Activated CD8-positive, alpha-beta T cell treated with anti-CD3 and anti-CD28 coated beads for 36 hours (primary cell): ENCODE measurements at regions of chr1 and their contacts with region 1.

Region 1: GRCh38 chr1:169601093-169601881 is 15.0 kb upstream of the F5 start:
- DNase-seq: no peak
- ATAC-seq: peak; percentile 38
- H3K4me3 Mint-ChIP-seq: no peak overlapping the region
- H3K27ac Mint-ChIP-seq: peak overlapping the region; percentile 69
- H3K4me1 Mint-ChIP-seq: peaks cover 47% of the 10 kb centered on the region
- H3K27me3 Mint-ChIP-seq: no peaks in the 10 kb centered on the region
- CTCF ChIP-seq: peak; percentile 77

Region 2: DNA sequence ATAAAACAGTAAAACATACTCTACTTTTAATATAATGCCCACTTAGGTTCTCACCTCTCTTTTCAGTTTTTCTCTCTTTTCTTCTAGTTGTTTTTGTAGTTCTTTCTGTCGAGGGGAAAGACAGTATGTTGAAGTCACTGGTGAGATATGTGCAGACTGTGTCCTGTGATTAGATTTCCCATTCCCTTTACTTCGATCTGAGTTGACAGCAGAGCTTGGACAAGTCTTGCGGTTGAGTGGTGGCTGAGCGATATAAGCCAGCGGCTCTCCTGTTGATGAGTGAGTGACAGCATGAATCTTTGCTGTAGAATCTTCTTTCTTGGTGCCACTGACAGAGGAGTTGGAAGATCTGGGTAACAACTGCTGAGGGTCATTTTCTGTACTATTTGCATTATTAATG is 180.0 kb before region 1 on chr1:
- CTCF ChIA-PET with region 1: no interaction called
- POLR2A ChIA-PET with region 1: no interaction called
- intact Hi-C with region 1: no loop called
- DNase-seq: no peak
- ATAC-seq: no peak
- H3K4me3 Mint-ChIP-seq: no peak overlapping the region
- H3K27ac Mint-ChIP-seq: no peak overlapping the region
- H3K4me1 Mint-ChIP-seq: no peaks in the 10 kb centered on the region
- H3K27me3 Mint-ChIP-seq: peaks cover 39% of the 10 kb centered on the region
- CTCF ChIP-seq: no peak

Region 3: GRCh38 chr1:169618367-169618766 is 17.1 kb after region 1 on chr1:
- CTCF ChIA-PET with region 1: interaction called, 25 read pairs
- POLR2A ChIA-PET with region 1: interaction called, 4 read pairs
- intact Hi-C with region 1: no loop called
- DNase-seq: no peak
- ATAC-seq: no peak
- H3K4me3 Mint-ChIP-seq: no peak overlapping the region
- H3K27ac Mint-ChIP-seq: no peak overlapping the region
- H3K4me1 Mint-ChIP-seq: peaks cover 18% of the 10 kb centered on the region
- H3K27me3 Mint-ChIP-seq: no peaks in the 10 kb centered on the region
- CTCF ChIP-seq: no peak

Region 4: DNA sequence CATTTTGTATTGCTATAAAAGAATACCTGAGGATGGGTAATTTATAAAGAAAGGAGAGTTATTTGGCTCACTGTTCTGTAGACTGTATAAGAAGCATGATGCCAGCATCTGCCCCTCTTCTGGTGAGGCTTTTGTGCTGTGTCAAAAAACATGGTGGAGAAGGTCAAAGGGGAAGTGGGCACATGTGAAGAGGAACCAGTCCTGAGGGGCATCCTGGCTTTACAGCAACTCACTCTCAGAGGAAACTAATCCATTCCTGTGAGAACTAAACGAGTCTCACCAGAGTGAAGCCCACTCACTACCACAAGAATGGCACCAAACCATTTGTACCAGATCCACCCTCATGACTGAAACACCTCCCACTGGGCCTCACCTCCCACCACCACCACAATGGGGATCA is 47.4 kb after region 1 on chr1:
- CTCF ChIA-PET with region 1: interaction called, 10 read pairs
- POLR2A ChIA-PET with region 1: no interaction called
- intact Hi-C with region 1: no loop called
- DNase-seq: no peak
- ATAC-seq: peak; percentile 37
- H3K4me3 Mint-ChIP-seq: no peak overlapping the region
- H3K27ac Mint-ChIP-seq: peak overlapping the region; percentile 58
- H3K4me1 Mint-ChIP-seq: peaks cover 33% of the 10 kb centered on the region
- H3K27me3 Mint-ChIP-seq: no peaks in the 10 kb centered on the region
- CTCF ChIP-seq: no peak

Region 5: DNA sequence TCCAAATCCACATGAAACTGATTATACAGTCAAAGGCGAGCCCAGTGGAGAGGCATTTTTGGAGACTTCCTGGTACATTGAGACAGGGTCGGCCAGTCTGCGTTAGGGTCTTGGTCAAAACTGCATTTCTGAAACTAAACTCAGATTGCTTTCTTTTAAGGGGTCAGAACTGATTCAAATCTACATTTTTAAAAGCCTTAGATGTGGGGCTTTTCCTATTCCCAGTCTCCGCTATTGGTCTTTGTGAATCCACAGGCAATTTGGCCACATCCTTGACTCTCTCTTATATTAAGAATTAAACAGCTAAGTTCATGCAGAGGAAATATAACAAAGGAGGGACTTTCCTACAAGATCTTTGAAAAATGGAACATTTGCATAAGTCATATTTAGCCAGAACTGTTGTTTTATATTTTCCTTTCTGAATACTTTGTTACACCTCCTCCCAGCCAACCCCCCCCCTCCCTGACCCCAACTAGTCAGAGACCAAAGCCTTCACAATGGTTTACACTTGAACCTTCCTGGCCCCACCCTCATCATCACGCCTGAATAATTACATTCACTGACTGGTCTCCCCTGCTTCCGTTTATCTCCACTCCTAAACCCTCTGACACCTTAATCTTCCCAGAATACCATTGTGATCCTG is 79.2 kb after region 1 on chr1:
- CTCF ChIA-PET with region 1: interaction called, 21 read pairs
- POLR2A ChIA-PET with region 1: no interaction called
- intact Hi-C with region 1: no loop called
- DNase-seq: peak; percentile 83
- ATAC-seq: peak; percentile 85
- H3K4me3 Mint-ChIP-seq: peak overlapping the region; percentile 48
- H3K27ac Mint-ChIP-seq: peak overlapping the region; percentile 92
- H3K4me1 Mint-ChIP-seq: peaks cover 59% of the 10 kb centered on the region
- H3K27me3 Mint-ChIP-seq: no peaks in the 10 kb centered on the region
- CTCF ChIP-seq: no peak

Region 6: DNA sequence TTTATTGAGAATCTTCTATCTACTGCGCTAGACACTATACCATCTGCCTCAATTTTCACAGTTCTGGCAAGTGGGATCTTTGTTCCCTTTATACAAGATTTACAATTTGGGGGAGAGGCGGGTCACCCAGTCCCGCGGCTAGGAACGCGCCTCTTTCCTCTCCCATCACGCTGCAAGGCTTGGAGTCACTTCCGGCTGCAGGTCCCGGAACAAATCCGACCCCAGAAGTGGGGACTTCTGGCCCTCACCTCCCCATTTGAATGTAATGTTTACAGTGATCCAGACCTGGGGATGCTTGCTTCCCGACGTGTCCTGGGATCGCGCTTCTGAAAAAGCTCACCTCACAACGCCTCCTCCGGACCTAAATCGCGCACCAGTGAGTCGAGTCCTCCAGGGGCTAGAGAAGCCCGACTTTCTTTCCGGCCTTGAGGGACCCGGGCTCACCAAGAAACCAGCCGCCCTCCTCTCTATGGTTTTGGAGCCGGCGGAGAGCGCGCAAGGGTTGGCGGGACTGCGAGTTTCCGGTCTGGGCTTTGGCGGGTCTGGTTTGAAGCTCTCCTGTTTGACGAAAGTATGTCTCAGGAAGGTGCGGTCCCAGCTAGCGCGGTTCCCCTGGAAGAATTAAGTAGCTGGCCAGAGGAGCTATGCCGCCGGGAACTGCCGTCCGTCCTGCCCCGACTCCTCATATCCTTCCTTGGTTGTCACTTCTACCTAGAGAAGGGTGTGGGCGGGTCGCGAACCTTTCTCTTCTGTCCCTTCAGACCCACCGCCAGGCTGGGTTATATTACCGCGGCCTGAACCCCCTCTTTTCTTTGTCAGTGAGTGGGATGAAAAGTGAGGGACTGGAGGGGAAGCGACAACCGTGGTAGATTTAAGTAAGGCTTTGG is 193.5 kb after region 1 on chr1 and contains the start of gene METTL18:
- CTCF ChIA-PET with region 1: interaction called, 24 read pairs
- POLR2A ChIA-PET with region 1: no interaction called
- intact Hi-C with region 1: no loop called
- DNase-seq: peak; percentile 96
- ATAC-seq: peak; percentile 98
- H3K4me3 Mint-ChIP-seq: peak within 1 kb of the TSS; percentile 89
- H3K27ac Mint-ChIP-seq: peak within 1 kb of the TSS; percentile 98
- H3K4me1 Mint-ChIP-seq: peaks cover 45% of the 10 kb centered on the region
- H3K27me3 Mint-ChIP-seq: no peaks in the 10 kb centered on the region
- CTCF ChIP-seq: peak; percentile 49
- total RNA-seq, gene METTL18: 8.7 to 10.8 TPM